ENCODE measurements at regions of chr18 and their contacts with region 1.

Region 1: DNA sequence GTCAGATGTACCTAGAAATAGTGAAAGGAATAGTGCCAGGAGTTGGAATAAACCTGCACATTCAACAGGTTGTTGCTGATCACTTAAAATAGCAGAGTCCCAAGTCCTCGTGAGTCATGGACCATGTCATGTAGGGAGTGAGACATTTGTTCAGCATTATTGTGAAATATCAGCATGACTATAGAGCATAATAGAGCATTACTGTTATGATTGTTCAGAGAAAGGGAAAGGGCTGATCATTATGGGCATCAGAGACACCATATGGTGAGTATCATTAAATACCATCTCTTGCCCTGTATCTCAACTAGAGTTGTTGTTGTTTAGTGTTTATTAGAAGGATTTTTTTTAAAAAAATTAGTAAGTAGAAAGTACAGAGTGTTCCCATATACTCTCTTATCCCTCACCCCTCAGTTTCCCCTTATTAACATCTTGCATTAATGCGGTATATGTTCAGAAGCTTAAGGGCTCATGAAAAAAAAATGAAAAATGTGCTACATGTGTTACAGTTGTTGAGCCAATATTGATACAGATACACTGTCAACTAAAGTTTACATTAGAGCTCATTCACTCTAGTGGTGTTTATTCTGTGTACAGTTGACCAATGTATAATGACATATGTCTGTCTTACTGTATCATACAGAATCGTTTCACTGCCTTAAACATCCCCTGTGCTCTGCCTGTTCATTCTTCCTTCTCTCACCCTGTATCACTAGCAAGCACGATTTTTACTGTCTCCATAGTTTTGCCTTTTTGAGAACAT is 5.7 kb downstream of the ELAC1 start:
- DNase-seq: peak in 1 of 3 donors; percentile 54
- ATAC-seq: peak; percentile 78 to 93 (median 91)
- H3K4me3 ChIP-seq: no peak overlapping the region
- H3K27ac ChIP-seq: peak overlapping the region in 1 of 3 donors; percentile 47
- H3K4me1 ChIP-seq: peaks cover 0 to 34% (median 15%) of the 10 kb centered on the region in 4 donors
- H3K27me3 ChIP-seq: no peaks in the 10 kb centered on the region
- CTCF ChIP-seq: no peak
- POLR2A ChIP-seq: no peak

Region 2: GRCh38 chr18:51029694-51030536 is 56.4 kb after region 1 on chr18 and contains the start of gene SMAD4:
- intact Hi-C with region 1: loop called (anchors 10 kb)
- DNase-seq: peak; percentile 97 to 98 (median 97)
- ATAC-seq: peak; percentile 94 to 96 (median 96)
- H3K4me3 ChIP-seq: peak within 1 kb of the TSS; percentile 51 to 84 (median 77)
- H3K27ac ChIP-seq: peak within 1 kb of the TSS; percentile 96 to 99 (median 98)
- H3K4me1 ChIP-seq: peaks cover 0 to 46% (median 6%) of the 10 kb centered on the region in 4 donors
- H3K27me3 ChIP-seq: no peaks in the 10 kb centered on the region
- CTCF ChIP-seq: no peak
- POLR2A ChIP-seq: peak; percentile 93
- total RNA-seq, gene SMAD4: 40.8 to 71.9 (median 56.6) TPM

Region 3: GRCh38 chr18:51603551-51603950 is 630.0 kb after region 1 on chr18:
- intact Hi-C with region 1: no loop called
- DNase-seq: no peak
- ATAC-seq: no peak
- H3K4me3 ChIP-seq: no peak overlapping the region
- H3K27ac ChIP-seq: no peak overlapping the region
- H3K4me1 ChIP-seq: no peaks in the 10 kb centered on the region
- H3K27me3 ChIP-seq: no peaks in the 10 kb centered on the region
- CTCF ChIP-seq: no peak
- POLR2A ChIP-seq: no peak